ENCODE measurements at regions of chr12 and their contacts with region 1.

Region 1: GRCh38 chr12:59916988-59917387 is 321.2 kb downstream of the SLC16A7 start:
- DNase-seq: no peak
- H3K4me3 ChIP-seq: no peak overlapping the region
- CTCF ChIP-seq: no peak
- POLR2A ChIP-seq: no peak

Region 2: GRCh38 chr12:59999291-59999690 is 82.3 kb after region 1 on chr12:
- intact Hi-C with region 1: loop called (anchors 2 kb)
- DNase-seq: no peak
- H3K4me3 ChIP-seq: no peak overlapping the region
- CTCF ChIP-seq: no peak
- POLR2A ChIP-seq: no peak

Measured in lower leg skin (tissue), 4 donors.